ENCODE measurements at regions of chr9 and their contacts with region 1.

Region 1: GRCh38 chr9:35481347-35481975 is 8.4 kb upstream of the RUSC2 start:
- DNase-seq: peak; percentile 12
- H3K4me3 Mint-ChIP-seq: no peak overlapping the region
- H3K27ac Mint-ChIP-seq: no peak overlapping the region
- H3K4me1 Mint-ChIP-seq: no peaks in the 10 kb centered on the region
- H3K27me3 Mint-ChIP-seq: peaks cover 7% of the 10 kb centered on the region

Region 2: GRCh38 chr9:34759432-34760134 is 721.9 kb before region 1 on chr9:
- intact Hi-C with region 1: loop called (anchors 2 kb)
- DNase-seq: no peak
- H3K4me3 Mint-ChIP-seq: no peak overlapping the region
- H3K27ac Mint-ChIP-seq: no peak overlapping the region
- H3K4me1 Mint-ChIP-seq: no peaks in the 10 kb centered on the region
- H3K27me3 Mint-ChIP-seq: peaks cover 33% of the 10 kb centered on the region

Region 3: GRCh38 chr9:35258676-35259474 is 222.6 kb before region 1 on chr9:
- intact Hi-C with region 1: loop called (anchors 5 kb)
- DNase-seq: no peak
- H3K4me3 Mint-ChIP-seq: no peak overlapping the region
- H3K27ac Mint-ChIP-seq: no peak overlapping the region
- H3K4me1 Mint-ChIP-seq: peaks cover 5% of the 10 kb centered on the region
- H3K27me3 Mint-ChIP-seq: peaks cover 2% of the 10 kb centered on the region

Region 4: DNA sequence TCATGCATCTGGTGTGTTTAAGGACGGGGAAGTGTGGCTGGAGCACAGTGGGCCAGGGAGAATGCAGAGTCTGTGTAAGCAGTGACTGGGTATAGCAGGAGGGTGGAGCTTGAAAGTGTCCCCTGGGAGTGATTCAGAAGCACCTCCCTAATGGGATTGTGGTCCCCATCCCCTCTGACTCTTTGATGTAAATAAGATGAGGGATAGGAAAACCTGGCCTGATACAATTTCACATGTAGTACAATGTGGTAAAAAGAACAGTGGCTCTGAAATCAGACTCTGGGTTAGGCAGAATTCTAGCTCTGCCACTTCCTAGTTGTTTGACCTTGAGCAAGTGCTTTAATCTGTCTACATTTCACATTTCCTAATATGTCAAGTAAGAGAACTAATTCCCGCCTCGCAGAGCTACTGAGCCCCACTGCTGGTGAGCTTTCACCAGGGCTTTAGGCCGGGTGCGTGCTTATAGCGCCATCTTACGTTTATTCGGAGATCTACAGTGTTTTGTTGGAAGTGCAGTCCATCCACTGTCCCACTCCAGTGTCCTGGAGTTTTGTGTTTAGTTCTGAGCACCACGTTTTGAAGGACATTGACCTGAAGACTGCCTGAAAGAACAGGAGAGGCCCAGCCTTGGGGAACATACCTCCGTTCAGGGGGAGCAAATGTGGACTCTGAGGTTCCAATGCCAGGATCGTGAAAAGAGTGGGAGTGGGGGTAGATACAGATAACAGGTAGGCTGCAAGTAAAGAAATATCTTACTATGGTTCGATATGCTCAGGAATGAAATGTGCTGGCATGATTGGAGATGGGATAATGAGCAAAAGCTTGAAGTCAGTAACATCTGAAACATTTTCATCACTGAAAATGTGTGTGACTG is 72.4 kb after region 1 on chr9:
- intact Hi-C with region 1: loop called (anchors 1 kb)
- DNase-seq: peak; percentile 23
- H3K4me3 Mint-ChIP-seq: no peak overlapping the region
- H3K27ac Mint-ChIP-seq: no peak overlapping the region
- H3K4me1 Mint-ChIP-seq: no peaks in the 10 kb centered on the region
- H3K27me3 Mint-ChIP-seq: peaks cover 1% of the 10 kb centered on the region

Region 5: GRCh38 chr9:35646533-35647265 is 165.2 kb after region 1 on chr9:
- intact Hi-C with region 1: no loop called
- DNase-seq: peak; percentile 91
- H3K4me3 Mint-ChIP-seq: peak overlapping the region; percentile 92
- H3K27ac Mint-ChIP-seq: peak overlapping the region; percentile 93
- H3K4me1 Mint-ChIP-seq: peaks cover 49% of the 10 kb centered on the region
- H3K27me3 Mint-ChIP-seq: peaks cover 1% of the 10 kb centered on the region

Region 6: DNA sequence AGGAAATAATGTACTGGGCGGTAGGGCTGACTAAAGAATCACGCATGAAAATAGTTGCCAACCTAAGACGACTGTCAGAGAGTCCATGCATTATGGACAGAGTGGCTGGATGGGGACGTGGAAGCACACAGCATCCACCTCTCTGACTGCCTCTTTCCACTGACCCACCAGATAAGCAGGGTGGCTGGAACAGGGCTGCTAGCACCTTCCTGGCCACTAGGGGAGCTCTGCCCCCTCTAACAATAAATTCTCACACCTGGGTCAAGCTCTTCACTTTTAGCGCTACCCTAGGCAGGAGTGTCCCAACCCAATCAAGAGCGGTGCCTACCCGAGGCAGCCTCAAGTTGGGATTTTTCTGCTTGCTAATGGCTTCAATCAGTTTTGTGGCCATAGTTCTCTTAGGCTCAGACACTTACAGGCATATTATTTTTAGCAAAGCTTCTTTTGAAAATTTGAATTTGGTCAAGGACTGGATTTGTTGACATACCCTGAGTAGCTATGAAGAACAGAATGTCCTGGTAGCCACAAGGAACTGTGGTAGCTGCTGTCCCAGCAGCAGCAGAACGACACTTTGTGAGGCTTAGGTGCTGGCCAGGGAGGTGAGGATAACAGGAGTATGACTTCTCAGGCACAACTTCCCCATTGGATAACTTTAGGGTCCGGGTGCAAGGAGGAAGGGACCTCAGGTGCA is 215.2 kb after region 1 on chr9:
- intact Hi-C with region 1: loop called (anchors 1 kb)
- DNase-seq: peak; percentile 23
- H3K4me3 Mint-ChIP-seq: no peak overlapping the region
- H3K27ac Mint-ChIP-seq: no peak overlapping the region
- H3K4me1 Mint-ChIP-seq: peaks cover 5% of the 10 kb centered on the region
- H3K27me3 Mint-ChIP-seq: no peaks in the 10 kb centered on the region

Region 7: GRCh38 chr9:35882263-35882848 is 400.9 kb after region 1 on chr9:
- intact Hi-C with region 1: loop called (anchors 5 kb)
- DNase-seq: peak; percentile 55
- H3K4me3 Mint-ChIP-seq: no peak overlapping the region
- H3K27ac Mint-ChIP-seq: no peak overlapping the region
- H3K4me1 Mint-ChIP-seq: no peaks in the 10 kb centered on the region
- H3K27me3 Mint-ChIP-seq: peaks cover 22% of the 10 kb centered on the region

Measured in activated T-helper 1 cell treated with anti-CD3 and anti-CD28 coated beads, Interleukin-12 subunit alpha, Interleukin-12 subunit beta, Interleukin-2, Interleukin-4 antibody, amounts not matched to agents 30 ng/mL and 10 ng/mL and 1 ng/mL, durations not matched to agents 14 hours and 24 hours and 36 hours (primary cell).